Activated B cell treated with CpG ODN at 0.5 μM for 24 hours (primary cell): ENCODE measurements at regions of chr2 and their contacts with region 1.

Region 1: DNA sequence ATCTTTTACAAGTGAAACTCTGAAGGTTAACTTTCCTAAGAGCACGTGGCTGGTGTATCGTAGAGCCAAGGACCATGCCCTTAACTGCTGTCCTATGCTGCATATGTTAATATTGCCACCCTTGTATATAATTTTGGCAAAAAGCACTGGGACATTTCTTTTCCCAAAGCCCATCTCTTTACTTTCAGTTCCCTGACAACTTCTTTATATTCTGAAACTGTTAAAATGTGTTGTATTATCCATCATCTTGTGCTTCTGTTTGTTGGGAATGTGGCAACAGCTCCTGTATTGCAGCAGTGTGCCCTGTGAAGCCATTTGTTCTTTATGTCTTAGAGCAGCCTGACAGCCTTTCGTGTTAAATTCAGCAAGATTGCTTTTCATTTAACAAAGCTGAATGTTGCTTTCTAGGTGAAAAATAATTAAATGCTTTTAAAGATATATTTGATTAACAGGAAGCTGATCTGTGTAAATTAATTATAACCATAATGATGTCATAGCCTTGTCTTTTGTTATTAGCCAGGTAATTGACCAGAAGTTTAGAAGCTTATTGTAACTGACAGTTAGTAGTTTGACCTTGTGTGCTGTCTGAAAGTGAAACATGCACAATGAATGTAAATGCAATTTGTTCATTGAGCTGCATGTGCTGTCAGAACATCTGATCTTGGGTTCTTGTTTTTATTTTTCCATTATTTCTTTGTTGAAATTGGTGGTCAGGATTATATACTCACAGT is 9.7 kb downstream of the RHBDD1 start:
- DNase-seq: no peak
- ATAC-seq: no peak
- H3K4me3 Mint-ChIP-seq: no peak overlapping the region
- H3K27ac Mint-ChIP-seq: no peak overlapping the region
- H3K4me1 Mint-ChIP-seq: peaks cover 60% of the 10 kb centered on the region
- H3K27me3 Mint-ChIP-seq: no peaks in the 10 kb centered on the region
- CTCF ChIP-seq: no peak

Region 2: DNA sequence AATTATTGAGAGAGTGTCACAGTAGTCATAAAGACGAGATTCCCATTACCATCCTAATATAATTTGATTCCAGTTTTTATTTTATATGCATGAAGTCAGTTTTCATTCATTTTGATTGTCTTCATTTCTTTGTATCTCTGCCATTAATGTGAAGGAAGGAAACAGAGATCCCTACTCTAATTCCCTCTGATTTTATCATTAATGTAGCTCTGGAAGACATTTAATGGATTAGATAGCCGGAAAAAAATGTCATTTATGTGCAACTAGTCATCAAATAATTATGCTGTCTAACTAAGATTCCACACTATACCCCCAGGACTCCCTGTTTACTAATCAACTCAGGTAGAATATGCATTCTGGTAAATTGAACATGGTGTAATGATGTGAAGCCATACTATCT is 10.2 kb after region 1 on chr2:
- CTCF ChIA-PET with region 1: no interaction called
- POLR2A ChIA-PET with region 1: no interaction called
- intact Hi-C with region 1: loop called (anchors 1 kb)
- DNase-seq: no peak
- ATAC-seq: no peak
- H3K4me3 Mint-ChIP-seq: no peak overlapping the region
- H3K27ac Mint-ChIP-seq: no peak overlapping the region
- H3K4me1 Mint-ChIP-seq: peaks cover 19% of the 10 kb centered on the region
- H3K27me3 Mint-ChIP-seq: no peaks in the 10 kb centered on the region
- CTCF ChIP-seq: no peak

Region 3: DNA sequence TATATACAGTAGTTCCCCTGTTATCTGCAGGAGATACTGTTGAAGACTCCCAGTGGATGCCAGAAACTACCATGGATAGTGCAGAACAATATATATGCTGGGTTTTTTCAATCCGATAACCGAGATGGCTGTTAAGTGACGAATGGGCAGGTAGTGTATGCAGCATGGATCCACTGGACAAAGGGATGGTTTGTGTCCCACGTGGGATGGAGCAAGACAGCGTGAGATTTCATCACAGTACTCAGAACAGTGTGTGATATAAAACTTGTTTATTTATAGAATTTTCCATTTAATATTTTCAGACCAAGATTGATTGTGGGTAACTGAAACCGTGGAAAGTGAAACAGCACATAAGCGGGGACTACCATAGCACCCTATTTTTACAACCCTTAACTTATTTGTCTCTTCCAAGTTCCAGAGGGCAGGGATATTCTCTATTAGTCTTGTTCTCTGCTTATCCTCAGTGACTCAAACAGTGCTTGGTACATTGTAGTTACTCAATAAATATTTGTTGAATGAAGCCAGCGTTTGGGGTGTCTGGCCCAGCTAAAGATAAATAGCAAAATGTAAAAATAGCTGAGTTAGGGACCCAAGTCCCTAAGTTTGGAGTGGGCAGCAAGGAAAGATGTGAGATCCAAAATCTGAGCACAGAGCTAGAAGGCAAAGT is 40.4 kb after region 1 on chr2:
- CTCF ChIA-PET with region 1: no interaction called
- POLR2A ChIA-PET with region 1: no interaction called
- intact Hi-C with region 1: loop called (anchors 5 kb)
- DNase-seq: no peak
- ATAC-seq: no peak
- H3K4me3 Mint-ChIP-seq: no peak overlapping the region
- H3K27ac Mint-ChIP-seq: no peak overlapping the region
- H3K4me1 Mint-ChIP-seq: peaks cover 8% of the 10 kb centered on the region
- H3K27me3 Mint-ChIP-seq: no peaks in the 10 kb centered on the region
- CTCF ChIP-seq: no peak

Region 4: GRCh38 chr2:226934546-226935201 is 89.1 kb after region 1 on chr2:
- CTCF ChIA-PET with region 1: no interaction called
- POLR2A ChIA-PET with region 1: no interaction called
- intact Hi-C with region 1: no loop called
- DNase-seq: no peak
- ATAC-seq: no peak
- H3K4me3 Mint-ChIP-seq: no peak overlapping the region
- H3K27ac Mint-ChIP-seq: no peak overlapping the region
- H3K4me1 Mint-ChIP-seq: peaks cover 17% of the 10 kb centered on the region
- H3K27me3 Mint-ChIP-seq: no peaks in the 10 kb centered on the region
- CTCF ChIP-seq: no peak